B cell (primary cell): ENCODE measurements at regions of chr10 and their contacts with region 1.

Region 1: DNA sequence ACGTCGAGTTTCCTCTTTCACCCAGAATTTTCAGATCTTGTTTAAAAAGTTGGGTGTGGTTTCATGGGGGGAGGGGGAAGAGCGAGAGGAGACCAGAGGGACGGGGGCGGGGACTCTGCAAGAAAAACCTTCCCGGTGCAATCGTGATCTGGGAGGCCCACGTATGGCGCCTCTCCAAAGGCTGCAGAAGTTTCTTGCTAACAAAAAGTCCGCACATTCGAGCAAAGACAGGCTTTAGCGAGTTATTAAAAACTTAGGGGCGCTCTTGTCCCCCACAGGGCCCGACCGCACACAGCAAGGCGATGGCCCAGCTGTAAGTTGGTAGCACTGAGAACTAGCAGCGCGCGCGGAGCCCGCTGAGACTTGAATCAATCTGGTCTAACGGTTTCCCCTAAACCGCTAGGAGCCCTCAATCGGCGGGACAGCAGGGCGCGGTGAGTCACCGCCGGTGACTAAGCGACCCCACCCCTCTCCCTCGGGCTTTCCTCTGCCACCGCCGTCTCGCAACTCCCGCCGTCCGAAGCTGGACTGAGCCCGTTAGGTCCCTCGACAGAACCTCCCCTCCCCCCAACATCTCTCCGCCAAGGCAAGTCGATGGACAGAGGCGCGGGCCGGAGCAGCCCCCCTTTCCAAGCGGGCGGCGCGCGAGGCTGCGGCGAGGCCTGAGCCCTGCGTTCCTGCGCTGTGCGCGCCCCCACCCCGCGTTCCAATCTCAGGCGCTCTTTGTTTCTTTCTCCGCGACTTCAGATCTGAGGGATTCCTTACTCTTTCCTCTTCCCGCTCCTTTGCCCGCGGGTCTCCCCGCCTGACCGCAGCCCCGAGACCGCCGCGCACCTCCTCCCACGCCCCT is at the start of gene VIM:
- DNase-seq: peak; percentile 91
- ATAC-seq: peak; percentile 42
- H3K4me3 ChIP-seq: peak within 1 kb of the TSS; percentile 74 to 89 (median 82)
- H3K4me3 Mint-ChIP-seq: peak within 1 kb of the TSS; percentile 99
- H3K27ac ChIP-seq: peak within 1 kb of the TSS; percentile 91 to 97
- H3K27ac Mint-ChIP-seq: peak within 1 kb of the TSS; percentile 100
- H3K4me1 ChIP-seq: peaks cover 31% of the 10 kb centered on the region in 2 donors
- H3K4me1 Mint-ChIP-seq: peaks cover 38% of the 10 kb centered on the region
- H3K27me3 ChIP-seq: no peaks in the 10 kb centered on the region
- H3K27me3 Mint-ChIP-seq: no peaks in the 10 kb centered on the region
- CTCF ChIP-seq: peak; percentile 5
- total RNA-seq, gene VIM: 333 and 343 TPM in 2 replicates

Region 2: GRCh38 chr10:16436758-16437539 is 791.4 kb before region 1 on chr10 and contains the start of gene PTER:
- CTCF ChIA-PET with region 1: no interaction called
- POLR2A ChIA-PET with region 1: interaction called, 4 read pairs
- intact Hi-C with region 1: loop called (anchors 10 kb)
- DNase-seq: peak; percentile 95
- ATAC-seq: peak; percentile 100
- H3K4me3 ChIP-seq: peak within 1 kb of the TSS; percentile 57 to 94 (median 84)
- H3K4me3 Mint-ChIP-seq: peak within 1 kb of the TSS; percentile 94
- H3K27ac ChIP-seq: peak within 1 kb of the TSS; percentile 65 to 69
- H3K27ac Mint-ChIP-seq: peak within 1 kb of the TSS; percentile 91
- H3K4me1 ChIP-seq: peaks cover 20 to 26% of the 10 kb centered on the region in 2 donors
- H3K4me1 Mint-ChIP-seq: peaks cover 45% of the 10 kb centered on the region
- H3K27me3 ChIP-seq: no peaks in the 10 kb centered on the region
- H3K27me3 Mint-ChIP-seq: peaks cover 7% of the 10 kb centered on the region
- CTCF ChIP-seq: no peak
- total RNA-seq, gene PTER: 17.5 and 18.6 TPM in 2 replicates

Region 3: DNA sequence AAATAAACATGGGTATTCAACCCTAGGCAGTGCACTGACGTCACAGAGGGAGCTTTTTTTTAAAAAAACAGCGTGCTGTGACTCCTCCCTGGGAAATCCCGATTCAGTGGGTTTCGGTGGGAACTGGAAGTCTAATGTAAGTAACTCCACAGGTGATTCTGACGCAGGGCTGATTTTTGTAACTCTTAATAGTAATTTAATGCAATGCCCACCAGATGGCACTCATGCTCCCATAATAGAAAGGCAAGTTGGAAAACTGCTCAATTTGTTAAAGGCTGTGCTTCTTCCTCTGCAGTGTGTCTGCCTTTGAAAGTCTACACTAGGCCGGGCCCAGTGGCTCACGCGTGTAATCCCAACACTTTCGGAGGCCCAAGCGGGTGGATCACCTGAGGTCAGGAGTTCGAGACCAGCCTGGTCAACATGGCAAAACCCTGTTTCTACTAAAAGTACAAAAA is 400.2 kb before region 1 on chr10:
- CTCF ChIA-PET with region 1: interaction called, 10 read pairs
- POLR2A ChIA-PET with region 1: no interaction called
- intact Hi-C with region 1: no loop called
- DNase-seq: peak; percentile 81
- ATAC-seq: peak; percentile 86
- H3K4me3 ChIP-seq: no peak overlapping the region
- H3K4me3 Mint-ChIP-seq: no peak overlapping the region
- H3K27ac ChIP-seq: no peak overlapping the region
- H3K27ac Mint-ChIP-seq: no peak overlapping the region
- H3K4me1 ChIP-seq: peaks cover 0 to 4% of the 10 kb centered on the region in 2 donors
- H3K4me1 Mint-ChIP-seq: peaks cover 6% of the 10 kb centered on the region
- H3K27me3 ChIP-seq: peaks cover 0 to 5% (median 0%) of the 10 kb centered on the region in 4 experiments
- H3K27me3 Mint-ChIP-seq: peaks cover 4% of the 10 kb centered on the region
- CTCF ChIP-seq: peak; percentile 74

Region 4: GRCh38 chr10:17181758-17182157 is 46.6 kb before region 1 on chr10:
- CTCF ChIA-PET with region 1: no interaction called
- POLR2A ChIA-PET with region 1: no interaction called
- intact Hi-C with region 1: loop called (anchors 10 kb)
- DNase-seq: no peak
- ATAC-seq: no peak
- H3K4me3 ChIP-seq: no peak overlapping the region
- H3K4me3 Mint-ChIP-seq: no peak overlapping the region
- H3K27ac ChIP-seq: no peak overlapping the region
- H3K27ac Mint-ChIP-seq: no peak overlapping the region
- H3K4me1 ChIP-seq: no peaks in the 10 kb centered on the region
- H3K4me1 Mint-ChIP-seq: peaks cover 2% of the 10 kb centered on the region
- H3K27me3 ChIP-seq: no peaks in the 10 kb centered on the region
- H3K27me3 Mint-ChIP-seq: no peaks in the 10 kb centered on the region
- CTCF ChIP-seq: no peak

Region 5: DNA sequence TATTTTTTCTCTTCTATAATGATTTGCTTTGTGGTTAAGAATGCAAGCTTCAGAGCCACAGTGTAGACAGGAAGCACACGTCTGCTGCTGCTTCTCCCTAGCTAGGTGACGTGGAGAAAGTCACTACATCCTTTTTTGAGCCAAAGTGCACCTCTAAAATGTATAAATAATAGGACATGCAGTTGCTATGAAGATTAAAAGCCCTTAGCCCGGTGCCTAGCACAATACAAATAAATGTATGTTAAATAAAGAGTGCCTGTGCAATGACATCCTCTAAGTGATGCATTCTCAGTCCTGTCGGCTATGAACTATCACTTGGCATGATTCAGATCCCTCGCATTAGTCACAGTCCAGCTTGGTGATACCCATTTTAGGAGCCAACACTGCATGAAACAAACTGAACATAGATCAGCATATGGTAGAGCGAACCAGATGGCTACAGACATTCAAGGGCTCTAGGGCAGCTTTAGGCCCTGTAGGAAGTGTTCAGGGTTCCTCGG is 22.1 kb before region 1 on chr10:
- CTCF ChIA-PET with region 1: interaction called, 94 read pairs
- POLR2A ChIA-PET with region 1: interaction called, 91 read pairs
- intact Hi-C with region 1: loop called (anchors 1 kb)
- DNase-seq: peak; percentile 74
- ATAC-seq: peak; percentile 45
- H3K4me3 ChIP-seq: no peak overlapping the region
- H3K4me3 Mint-ChIP-seq: peak overlapping the region; percentile 43
- H3K27ac ChIP-seq: peak overlapping the region in 1 of 2 donors; percentile 42
- H3K27ac Mint-ChIP-seq: peak overlapping the region; percentile 78
- H3K4me1 ChIP-seq: peaks cover 9 to 19% of the 10 kb centered on the region in 2 donors
- H3K4me1 Mint-ChIP-seq: peaks cover 14% of the 10 kb centered on the region
- H3K27me3 ChIP-seq: no peaks in the 10 kb centered on the region
- H3K27me3 Mint-ChIP-seq: no peaks in the 10 kb centered on the region
- CTCF ChIP-seq: no peak

Region 6: DNA sequence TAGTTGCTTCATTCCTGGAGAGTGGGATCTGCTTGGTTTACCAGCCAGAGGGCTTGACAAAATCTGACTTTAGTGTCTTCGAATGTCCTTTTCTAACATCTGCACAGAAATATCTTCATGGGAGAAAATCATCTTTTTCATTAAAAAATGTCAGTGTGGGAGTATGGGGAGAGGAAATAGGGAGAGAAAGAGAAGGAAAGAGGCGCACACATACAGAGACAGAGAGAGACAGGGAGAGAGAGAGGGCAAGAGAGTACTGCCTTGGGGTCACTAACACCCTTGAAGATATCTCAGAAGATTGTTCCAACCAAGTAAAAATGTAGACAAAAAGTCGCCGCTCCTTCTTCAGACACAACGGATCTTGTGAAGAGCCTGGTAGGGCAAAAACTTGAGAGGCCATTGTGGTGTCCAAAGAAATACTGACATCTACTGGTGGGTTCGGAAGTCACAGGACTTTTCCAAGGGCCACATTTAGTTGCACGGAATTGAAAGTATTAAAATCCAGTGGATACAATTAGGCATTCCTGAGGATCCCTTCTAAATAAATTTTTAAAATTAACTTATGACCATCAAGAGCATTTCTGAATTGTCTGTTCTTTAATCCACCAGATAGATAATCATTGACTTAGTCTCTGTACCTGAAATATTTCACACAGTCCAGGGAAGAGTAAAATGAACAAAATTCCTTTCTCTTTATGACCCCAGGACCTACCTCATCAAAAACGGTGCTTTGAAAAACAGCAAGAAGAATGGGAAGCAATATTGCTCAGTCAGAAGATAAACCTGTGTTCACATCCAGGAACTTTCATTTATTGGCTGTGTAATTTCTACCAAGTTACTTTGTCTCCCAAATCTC is 29.4 kb after region 1 on chr10:
- CTCF ChIA-PET with region 1: interaction called, 13 read pairs
- POLR2A ChIA-PET with region 1: no interaction called
- intact Hi-C with region 1: no loop called
- DNase-seq: peak; percentile 74
- ATAC-seq: peak; percentile 64
- H3K4me3 ChIP-seq: no peak overlapping the region
- H3K4me3 Mint-ChIP-seq: no peak overlapping the region
- H3K27ac ChIP-seq: no peak overlapping the region
- H3K27ac Mint-ChIP-seq: no peak overlapping the region
- H3K4me1 ChIP-seq: peaks cover 0 to 3% of the 10 kb centered on the region in 2 donors
- H3K4me1 Mint-ChIP-seq: peaks cover 4% of the 10 kb centered on the region
- H3K27me3 ChIP-seq: no peaks in the 10 kb centered on the region
- H3K27me3 Mint-ChIP-seq: peaks cover 10% of the 10 kb centered on the region
- CTCF ChIP-seq: peak; percentile 90

Region 7: DNA sequence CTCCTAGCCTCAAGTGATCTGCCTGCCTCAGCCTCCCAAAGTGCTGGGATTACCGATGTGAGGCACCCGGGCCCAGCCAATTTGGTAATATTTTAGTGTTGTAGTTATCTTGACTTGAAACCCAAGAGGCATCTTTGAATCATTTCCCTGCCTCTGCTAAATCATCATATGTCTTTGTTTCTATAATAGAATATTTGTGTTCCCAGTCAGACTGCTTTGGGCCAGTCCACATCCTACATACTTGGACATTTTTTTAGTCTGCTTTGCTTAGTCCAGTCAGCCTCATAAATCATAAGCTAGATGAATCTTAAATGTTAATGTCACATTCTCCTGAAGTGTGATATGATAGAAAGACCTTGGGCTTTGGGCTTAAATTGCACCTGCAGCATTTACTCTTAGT is 421.5 kb after region 1 on chr10:
- CTCF ChIA-PET with region 1: no interaction called
- POLR2A ChIA-PET with region 1: no interaction called
- intact Hi-C with region 1: no loop called
- DNase-seq: no peak
- ATAC-seq: no peak
- H3K4me3 ChIP-seq: no peak overlapping the region
- H3K4me3 Mint-ChIP-seq: no peak overlapping the region
- H3K27ac ChIP-seq: no peak overlapping the region
- H3K27ac Mint-ChIP-seq: no peak overlapping the region
- H3K4me1 ChIP-seq: peaks cover 20 to 31% of the 10 kb centered on the region in 2 donors
- H3K4me1 Mint-ChIP-seq: peaks cover 60% of the 10 kb centered on the region
- H3K27me3 ChIP-seq: no peaks in the 10 kb centered on the region
- H3K27me3 Mint-ChIP-seq: no peaks in the 10 kb centered on the region
- CTCF ChIP-seq: no peak

Region 8: DNA sequence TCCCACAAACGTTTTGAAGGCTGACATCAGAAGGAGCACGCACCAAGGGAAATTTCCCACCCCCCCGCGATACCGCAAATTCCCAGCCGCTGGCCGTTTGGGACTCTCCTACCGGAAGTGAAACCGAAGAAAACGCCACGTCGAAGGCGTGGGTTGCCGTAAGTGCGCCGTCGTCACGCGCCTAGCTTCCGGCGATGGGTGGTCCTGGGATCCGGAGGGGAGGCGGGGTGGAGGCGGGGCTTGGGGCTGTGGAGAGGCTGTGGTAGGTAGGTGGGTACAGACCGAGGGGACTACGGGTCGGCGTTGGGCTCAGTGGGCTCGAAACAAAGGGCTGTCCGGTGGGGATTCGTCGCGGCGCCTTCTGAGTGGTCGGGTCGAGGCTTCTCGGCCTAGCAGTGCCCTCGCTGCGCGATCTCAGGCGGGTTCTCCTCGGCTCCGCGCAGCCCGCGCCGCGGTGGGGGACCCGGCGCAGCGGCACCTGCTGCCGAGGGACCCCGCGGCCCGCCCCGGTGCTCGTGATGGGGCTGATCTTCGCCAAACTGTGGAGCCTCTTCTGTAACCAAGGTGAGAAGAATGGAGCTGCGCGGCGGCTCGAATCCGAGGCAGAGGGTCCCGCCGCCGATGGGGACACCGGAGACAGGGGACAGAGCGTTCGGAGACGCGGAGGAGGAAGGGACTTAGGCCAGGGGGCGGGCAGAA is 1431.0 kb after region 1 on chr10 and contains the start of gene ARL5B:
- CTCF ChIA-PET with region 1: no interaction called
- POLR2A ChIA-PET with region 1: interaction called, 4 read pairs
- intact Hi-C with region 1: loop called (anchors 2 kb)
- DNase-seq: peak; percentile 99
- ATAC-seq: peak; percentile 96
- H3K4me3 ChIP-seq: peak within 1 kb of the TSS; percentile 93 to 96 (median 94)
- H3K4me3 Mint-ChIP-seq: peak within 1 kb of the TSS; percentile 100
- H3K27ac ChIP-seq: peak within 1 kb of the TSS; percentile 99
- H3K27ac Mint-ChIP-seq: peak within 1 kb of the TSS; percentile 99
- H3K4me1 ChIP-seq: peaks cover 25 to 27% of the 10 kb centered on the region in 2 donors
- H3K4me1 Mint-ChIP-seq: peaks cover 40% of the 10 kb centered on the region
- H3K27me3 ChIP-seq: no peaks in the 10 kb centered on the region
- H3K27me3 Mint-ChIP-seq: no peaks in the 10 kb centered on the region
- CTCF ChIP-seq: no peak
- total RNA-seq, gene ARL5B: 12.2 and 13.4 TPM in 2 replicates